ENCODE measurements at regions of chr11 and their contacts with region 1.

Region 1: GRCh38 chr11:64230171-64230984 is at the start of gene DNAJC4:
- DNase-seq: peak; percentile 89 to 96
- H3K4me3 ChIP-seq: peak within 1 kb of the TSS; percentile 81
- H3K27ac ChIP-seq: no peak within 1 kb of the TSS
- H3K4me1 ChIP-seq: peaks cover 31% of the 10 kb centered on the region
- H3K27me3 ChIP-seq: no peaks in the 10 kb centered on the region
- CTCF ChIP-seq: no peak
- total RNA-seq, gene DNAJC4: 55.0 and 57.1 TPM in 2 replicates

Region 2: GRCh38 chr11:64152841-64153691 is 77.3 kb before region 1 on chr11:
- CTCF ChIA-PET with region 1: no interaction called
- POLR2A ChIA-PET with region 1: no interaction called
- intact Hi-C with region 1: no loop called
- DNase-seq: peak in 1 of 2 experiments; percentile 78
- H3K4me3 ChIP-seq: no peak overlapping the region
- H3K27ac ChIP-seq: no peak overlapping the region
- H3K4me1 ChIP-seq: no peaks in the 10 kb centered on the region
- H3K27me3 ChIP-seq: no peaks in the 10 kb centered on the region
- CTCF ChIP-seq: peak; percentile 100

Region 3: DNA sequence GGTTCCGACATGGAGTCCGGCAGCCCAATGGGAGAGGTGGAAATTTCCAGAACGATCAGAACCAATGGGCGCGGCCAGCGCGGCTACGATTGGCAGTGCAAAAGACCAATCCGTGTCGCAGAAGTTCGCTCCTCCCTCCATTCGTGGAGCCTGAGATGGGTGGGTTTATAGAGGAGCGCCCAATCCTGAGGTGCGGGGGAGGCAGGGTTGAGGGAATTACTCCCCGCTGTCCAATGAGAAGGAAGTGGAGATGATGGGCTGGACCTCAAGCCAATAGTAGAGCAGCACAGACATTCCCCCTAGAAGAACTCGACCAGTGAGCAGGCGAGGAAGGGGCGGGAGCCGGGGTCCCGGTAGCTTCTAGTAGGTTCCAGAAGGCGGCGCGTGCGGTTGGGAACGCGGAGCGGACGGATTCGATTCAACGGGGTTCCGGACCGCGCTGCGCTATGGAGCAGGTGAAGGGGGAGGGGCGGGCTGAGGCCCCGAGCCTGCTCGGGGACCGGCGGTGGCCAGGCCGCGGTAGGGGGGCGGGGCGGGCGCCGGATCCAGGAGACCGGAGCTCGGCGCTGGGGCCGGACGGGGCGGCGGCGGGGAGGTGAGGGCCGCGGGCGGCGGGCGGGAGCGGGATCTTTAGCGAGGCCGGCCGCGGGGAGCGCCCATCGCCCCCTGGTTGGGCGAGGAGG is 44.4 kb before region 1 on chr11 and contains the start of gene STIP1:
- CTCF ChIA-PET with region 1: no interaction called
- POLR2A ChIA-PET with region 1: no interaction called
- intact Hi-C with region 1: loop called (anchors 5 kb)
- DNase-seq: peak; percentile 100
- H3K4me3 ChIP-seq: peak within 1 kb of the TSS; percentile 64
- H3K27ac ChIP-seq: peak within 1 kb of the TSS; percentile 64
- H3K4me1 ChIP-seq: peaks cover 28% of the 10 kb centered on the region
- H3K27me3 ChIP-seq: no peaks in the 10 kb centered on the region
- CTCF ChIP-seq: peak; percentile 31; the same call in 1 of the 2 replicates
- total RNA-seq, gene STIP1: 267 and 299 TPM in 2 replicates

Region 4: DNA sequence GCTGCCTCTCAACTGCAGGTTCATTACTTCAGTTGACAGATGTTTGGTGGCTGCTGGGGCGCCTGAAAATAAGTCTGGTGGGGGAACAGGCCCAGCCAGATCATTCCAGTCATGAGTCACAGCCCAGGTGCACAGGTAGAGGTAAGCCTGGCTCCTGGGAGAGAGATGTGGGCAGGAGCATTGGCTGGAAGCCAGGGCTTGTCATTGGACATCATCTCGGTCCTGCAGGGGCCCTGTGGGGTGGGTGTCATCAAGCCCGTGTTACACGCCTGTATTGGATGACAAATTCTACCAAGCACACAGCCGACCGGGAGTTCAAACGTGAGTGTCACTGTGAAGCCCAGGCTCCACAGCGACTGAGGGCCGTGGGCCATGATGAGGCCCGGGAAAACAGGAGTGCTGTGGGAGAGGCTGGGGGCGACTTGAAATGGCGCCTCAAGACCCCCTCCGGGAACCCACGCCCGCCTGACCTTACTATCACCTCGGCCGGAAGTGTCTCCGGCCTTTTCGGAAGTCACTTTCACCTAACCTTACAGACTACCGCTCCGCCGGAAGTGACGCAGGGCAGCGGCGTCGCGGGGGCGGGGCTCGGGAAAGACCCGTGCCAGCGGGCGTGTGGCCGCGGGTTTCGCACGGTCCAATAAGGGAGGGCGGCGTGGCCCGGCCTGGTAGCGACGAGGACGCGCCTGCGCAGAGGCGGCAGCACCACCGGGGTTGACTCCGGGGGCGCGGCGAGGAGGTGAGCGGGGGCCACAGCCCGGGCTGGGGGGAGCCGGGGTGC is 10.2 kb after region 1 on chr11 and contains the start of gene FKBP2:
- CTCF ChIA-PET with region 1: no interaction called
- POLR2A ChIA-PET with region 1: interaction called, 3 read pairs
- intact Hi-C with region 1: loop called (anchors 1 kb)
- DNase-seq: peak; percentile 97 to 98
- H3K4me3 ChIP-seq: peak within 1 kb of the TSS; percentile 90
- H3K27ac ChIP-seq: peak within 1 kb of the TSS; percentile 97
- H3K4me1 ChIP-seq: peaks cover 46% of the 10 kb centered on the region
- H3K27me3 ChIP-seq: no peaks in the 10 kb centered on the region
- CTCF ChIP-seq: no peak
- total RNA-seq, gene FKBP2: 84.2 and 93.2 TPM in 2 replicates

Region 5: DNA sequence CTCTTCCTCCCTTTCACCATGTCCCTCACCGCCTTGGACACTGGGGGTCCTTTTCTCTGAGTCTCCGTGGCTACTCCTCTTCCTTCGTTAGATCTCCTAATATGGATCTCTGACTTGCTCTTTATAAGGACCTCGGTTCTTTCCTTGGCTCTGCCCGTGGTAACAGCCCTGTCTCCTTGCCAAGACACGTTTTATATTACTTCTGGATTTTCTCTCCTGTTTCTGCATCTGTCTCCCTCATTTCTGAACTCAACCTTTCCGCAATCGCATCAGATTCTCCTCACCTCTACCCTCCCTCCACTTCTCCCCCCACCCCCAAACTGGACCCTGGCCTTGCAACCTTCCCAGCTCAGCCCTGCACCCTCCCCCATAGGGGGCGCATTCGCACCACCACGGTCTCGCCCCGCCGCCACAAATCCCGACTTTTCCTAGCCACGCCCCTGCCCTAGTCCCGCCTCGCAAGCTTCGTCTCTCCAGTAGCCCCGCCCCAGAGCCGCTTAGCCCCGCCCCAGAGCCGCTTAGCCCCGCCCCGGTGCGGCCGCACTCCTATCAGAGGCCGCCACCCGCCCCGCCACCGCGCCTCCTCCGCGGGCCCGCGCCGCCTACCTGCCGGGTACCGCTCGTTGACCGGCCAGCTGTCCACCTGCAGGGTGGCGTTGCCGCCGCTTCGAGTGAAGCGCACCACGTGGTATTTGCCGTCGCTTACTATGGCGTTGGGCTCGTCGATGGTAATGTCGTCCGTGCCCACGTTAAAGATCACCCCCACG is 399.6 kb after region 1 on chr11:
- CTCF ChIA-PET with region 1: no interaction called
- POLR2A ChIA-PET with region 1: no interaction called
- intact Hi-C with region 1: no loop called
- DNase-seq: no peak
- H3K4me3 ChIP-seq: no peak overlapping the region
- H3K27ac ChIP-seq: no peak overlapping the region
- H3K4me1 ChIP-seq: no peaks in the 10 kb centered on the region
- H3K27me3 ChIP-seq: peaks cover 51% of the 10 kb centered on the region
- CTCF ChIP-seq: no peak